PC-9 (cell line): ENCODE measurements at regions of chr4 and their contacts with region 1.

Region 1: DNA sequence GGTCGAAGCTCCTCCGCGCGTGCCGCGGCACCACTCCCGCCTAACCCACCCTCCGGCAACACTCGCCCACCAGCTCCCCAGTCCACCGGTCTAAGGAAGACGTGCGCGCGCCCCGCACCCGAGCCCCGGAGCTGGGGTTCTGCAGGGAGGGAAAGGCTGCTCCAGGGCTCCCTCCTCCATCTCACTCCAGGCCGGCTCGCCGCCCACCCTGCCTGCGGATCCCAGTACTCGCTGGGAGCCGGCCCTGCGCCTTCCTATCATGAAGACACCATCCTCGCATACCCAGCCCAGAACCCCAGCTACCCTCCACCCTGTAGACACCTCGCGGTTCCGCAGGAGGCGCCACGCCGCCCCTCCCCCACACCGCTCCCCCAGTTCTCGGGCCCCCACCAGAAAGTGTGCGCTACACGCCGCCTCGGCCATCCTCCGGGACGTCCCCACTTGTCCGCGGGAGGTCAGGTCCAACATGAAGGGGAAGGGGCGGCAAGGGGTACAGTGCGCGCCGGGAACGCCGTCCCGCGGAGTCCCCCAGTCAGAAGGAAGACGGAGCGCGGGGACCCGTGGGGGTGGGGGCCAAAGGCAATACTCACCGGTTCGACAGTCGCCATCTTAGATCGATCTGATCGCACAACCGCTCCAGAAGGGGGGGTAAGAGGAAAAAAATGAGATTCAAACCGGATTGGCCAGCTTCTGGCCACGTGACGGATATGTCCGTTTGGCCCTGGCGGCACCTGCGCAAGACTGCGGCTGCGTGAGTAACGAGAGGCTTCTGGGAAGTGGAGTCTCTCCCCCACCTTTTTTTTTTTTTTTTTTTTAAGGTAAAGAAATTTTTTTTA is at the start of gene EIF4E:
- DNase-seq: peak; percentile 90 to 98
- H3K4me3 ChIP-seq: peak within 1 kb of the TSS; percentile 96
- H3K27ac ChIP-seq: peak within 1 kb of the TSS; percentile 95
- H3K4me1 ChIP-seq: peaks cover 17% of the 10 kb centered on the region
- H3K27me3 ChIP-seq: no peaks in the 10 kb centered on the region
- CTCF ChIP-seq: no peak
- total RNA-seq, gene EIF4E: 47.1 and 59.6 TPM in 2 replicates

Region 2: GRCh38 chr4:98143001-98143899 is 785.5 kb before region 1 on chr4 and contains the start of gene STPG2:
- CTCF ChIA-PET with region 1: no interaction called
- POLR2A ChIA-PET with region 1: interaction called, 33 read pairs
- intact Hi-C with region 1: no loop called
- DNase-seq: peak; percentile 83 to 90
- H3K4me3 ChIP-seq: peak within 1 kb of the TSS; percentile 63
- H3K27ac ChIP-seq: peak within 1 kb of the TSS; percentile 89
- H3K4me1 ChIP-seq: peaks cover 21% of the 10 kb centered on the region
- H3K27me3 ChIP-seq: no peaks in the 10 kb centered on the region
- CTCF ChIP-seq: peak; percentile 79
- total RNA-seq, gene STPG2: 0.35 TPM in 1 of 2 replicates, not detected in the other

Region 3: GRCh38 chr4:98658287-98659105 is 270.2 kb before region 1 on chr4 and contains the start of gene TSPAN5:
- CTCF ChIA-PET with region 1: no interaction called
- POLR2A ChIA-PET with region 1: interaction called, 3 read pairs
- intact Hi-C with region 1: loop called (anchors 1 kb)
- DNase-seq: peak; percentile 65 to 78
- H3K4me3 ChIP-seq: peak within 1 kb of the TSS; percentile 95
- H3K27ac ChIP-seq: peak within 1 kb of the TSS; percentile 65
- H3K4me1 ChIP-seq: peaks cover 80% of the 10 kb centered on the region
- H3K27me3 ChIP-seq: no peaks in the 10 kb centered on the region
- CTCF ChIP-seq: no peak
- total RNA-seq, gene TSPAN5: 9.8 and 12.4 TPM in 2 replicates

Region 4: GRCh38 chr4:98728433-98728832 is 200.3 kb before region 1 on chr4:
- CTCF ChIA-PET with region 1: no interaction called
- POLR2A ChIA-PET with region 1: no interaction called
- intact Hi-C with region 1: no loop called
- DNase-seq: peak in 1 of 2 experiments; percentile 59
- H3K4me3 ChIP-seq: no peak overlapping the region
- H3K27ac ChIP-seq: no peak overlapping the region
- H3K4me1 ChIP-seq: peaks cover 12% of the 10 kb centered on the region
- H3K27me3 ChIP-seq: no peaks in the 10 kb centered on the region
- CTCF ChIP-seq: no peak

Region 5: DNA sequence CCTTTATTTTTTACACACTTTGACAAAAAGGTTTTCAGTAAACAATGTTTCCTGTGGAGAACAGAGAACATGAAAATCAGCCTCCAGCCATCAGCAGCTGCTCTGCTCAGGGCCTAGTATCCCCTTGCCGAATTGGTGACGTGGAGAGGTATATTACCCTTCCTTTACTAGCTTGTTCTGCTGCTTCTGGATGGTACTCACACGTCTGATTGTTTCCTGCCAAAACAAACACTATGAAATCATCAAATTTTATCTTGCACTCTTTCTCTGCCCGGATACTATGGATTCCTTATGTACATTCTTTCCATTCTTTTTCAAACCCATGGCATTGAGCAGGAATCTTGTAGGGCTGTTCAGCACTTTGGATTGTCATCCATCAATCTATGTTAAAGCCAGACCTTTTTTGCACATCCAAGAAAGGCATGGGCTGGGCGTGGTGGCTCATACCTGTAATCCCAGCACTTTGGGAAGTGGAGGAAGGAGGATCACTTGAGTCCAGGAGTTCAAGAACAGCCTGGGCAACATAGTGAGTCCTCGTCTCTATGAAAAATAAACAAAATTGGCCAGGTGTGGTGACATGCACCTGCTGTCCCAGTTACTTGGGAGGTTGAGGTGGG is 48.1 kb after region 1 on chr4:
- CTCF ChIA-PET with region 1: no interaction called
- POLR2A ChIA-PET with region 1: no interaction called
- intact Hi-C with region 1: no loop called
- DNase-seq: peak; percentile 15 to 60
- H3K4me3 ChIP-seq: no peak overlapping the region
- H3K27ac ChIP-seq: no peak overlapping the region
- H3K4me1 ChIP-seq: no peaks in the 10 kb centered on the region
- H3K27me3 ChIP-seq: no peaks in the 10 kb centered on the region
- CTCF ChIP-seq: no peak

Region 6: DNA sequence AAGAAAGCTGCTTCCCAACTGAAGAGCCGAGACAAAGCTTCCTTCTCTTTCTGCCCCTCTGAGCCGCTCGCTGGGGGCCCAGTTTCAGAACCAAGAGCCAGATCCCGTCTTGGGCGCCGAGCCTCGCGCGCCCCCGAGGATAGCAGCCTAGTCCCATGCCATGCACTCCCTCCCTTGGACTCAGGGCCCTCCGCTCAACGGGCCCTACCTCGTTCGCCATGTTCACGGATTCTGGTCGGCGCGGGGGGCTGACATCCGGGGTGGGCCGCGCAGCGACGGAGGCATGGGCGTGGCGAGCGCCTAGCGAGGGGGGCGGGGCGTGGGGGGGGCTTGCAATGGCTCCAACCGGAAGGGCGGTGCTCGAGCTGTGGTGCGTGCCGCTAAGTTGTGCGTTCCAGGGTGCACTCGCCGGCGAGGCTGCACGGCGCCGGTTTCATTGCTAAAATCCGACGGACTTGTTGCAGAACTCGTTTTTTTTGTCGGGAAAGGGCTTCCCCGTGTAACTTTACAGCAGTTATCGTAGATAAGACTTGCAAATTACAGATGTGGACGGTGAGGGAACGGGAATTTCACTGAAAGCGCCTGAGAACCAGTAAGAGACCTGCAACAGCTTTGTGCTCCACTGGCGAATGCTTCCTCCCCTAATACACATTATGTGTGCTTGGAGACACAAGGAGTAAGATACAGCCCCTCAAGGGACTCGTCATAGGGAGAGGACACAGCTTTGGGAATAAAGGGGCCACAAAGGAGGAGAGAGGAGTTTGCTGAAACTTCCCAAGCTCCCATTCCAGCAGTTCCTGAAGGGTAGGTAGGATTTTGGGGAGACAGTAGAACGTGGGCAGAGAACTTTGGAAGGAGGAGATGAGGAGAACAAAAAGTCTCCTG is 160.0 kb after region 1 on chr4 and contains the start of gene ADH5:
- CTCF ChIA-PET with region 1: no interaction called
- POLR2A ChIA-PET with region 1: interaction called, 49 read pairs
- intact Hi-C with region 1: no loop called
- DNase-seq: peak; percentile 65 to 66
- H3K4me3 ChIP-seq: peak within 1 kb of the TSS; percentile 99
- H3K27ac ChIP-seq: peak within 1 kb of the TSS; percentile 71
- H3K4me1 ChIP-seq: peaks cover 17% of the 10 kb centered on the region
- H3K27me3 ChIP-seq: no peaks in the 10 kb centered on the region
- CTCF ChIP-seq: no peak
- total RNA-seq, gene ADH5: 76.9 and 94.7 TPM in 2 replicates

Region 7: DNA sequence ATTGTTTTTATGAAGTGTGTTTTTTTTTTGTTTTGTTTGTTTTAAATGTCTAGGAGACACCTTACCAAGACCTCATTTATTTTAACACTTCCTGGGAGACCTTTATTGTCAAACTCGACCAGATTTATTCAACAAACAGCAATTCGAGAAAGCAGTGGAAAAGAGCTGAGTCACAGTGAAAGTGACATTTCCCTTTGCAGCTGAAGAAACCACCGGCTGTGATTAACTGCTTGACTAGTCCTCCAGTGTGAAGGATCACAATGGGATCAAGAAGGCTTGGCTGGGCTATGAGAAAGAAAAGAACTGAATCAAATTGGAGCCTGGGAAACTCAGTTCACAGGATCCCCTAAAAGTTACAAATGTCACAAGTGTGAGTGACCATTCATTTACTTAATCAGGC is 518.4 kb after region 1 on chr4:
- CTCF ChIA-PET with region 1: no interaction called
- POLR2A ChIA-PET with region 1: no interaction called
- intact Hi-C with region 1: loop called (anchors 5 kb)
- DNase-seq: peak; percentile 42 to 86
- H3K4me3 ChIP-seq: peak overlapping the region; percentile 29; the same call in 1 of the 2 replicates
- H3K27ac ChIP-seq: peak overlapping the region; percentile 99
- H3K4me1 ChIP-seq: peaks cover 28% of the 10 kb centered on the region
- H3K27me3 ChIP-seq: no peaks in the 10 kb centered on the region
- CTCF ChIP-seq: no peak